Activated CD4-positive, alpha-beta T cell treated with anti-CD3 and anti-CD28 coated beads for 36 hours (primary cell): ENCODE measurements at regions of chr3 and their contacts with region 1.

Region 1: GRCh38 chr3:189041482-189042090 is 130.2 kb upstream of the TPRG1 start:
- DNase-seq: peak; percentile 87
- ATAC-seq: peak; percentile 93
- H3K4me3 Mint-ChIP-seq: no peak overlapping the region
- H3K27ac Mint-ChIP-seq: no peak overlapping the region
- H3K4me1 Mint-ChIP-seq: peaks cover 36% of the 10 kb centered on the region
- H3K27me3 Mint-ChIP-seq: peaks cover 6% of the 10 kb centered on the region

Region 2: DNA sequence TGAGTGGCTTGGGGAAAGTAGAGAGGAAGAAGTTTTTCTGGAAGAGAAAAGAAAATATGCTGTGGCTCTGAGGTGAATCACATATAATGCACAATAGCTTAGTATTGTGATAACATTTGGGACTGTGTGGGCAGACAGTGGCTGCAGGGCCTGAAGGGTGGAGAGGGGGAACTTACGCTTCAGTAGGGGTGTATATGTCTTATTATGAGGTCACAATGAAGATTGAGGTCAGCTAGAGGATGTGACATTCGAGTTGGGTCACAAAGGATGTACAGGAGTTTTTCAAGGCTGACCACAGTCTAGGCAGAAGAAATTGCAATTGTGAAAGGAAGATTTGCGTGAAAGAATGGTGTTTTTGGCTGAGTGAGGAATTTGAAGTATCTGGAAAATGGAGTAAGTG is 472.9 kb before region 1 on chr3:
- CTCF ChIA-PET with region 1: no interaction called
- POLR2A ChIA-PET with region 1: no interaction called
- intact Hi-C with region 1: no loop called
- DNase-seq: no peak
- ATAC-seq: no peak
- H3K4me3 Mint-ChIP-seq: no peak overlapping the region
- H3K27ac Mint-ChIP-seq: no peak overlapping the region
- H3K4me1 Mint-ChIP-seq: peaks cover 3% of the 10 kb centered on the region
- H3K27me3 Mint-ChIP-seq: no peaks in the 10 kb centered on the region

Region 3: GRCh38 chr3:189013224-189013888 is 28.2 kb before region 1 on chr3:
- CTCF ChIA-PET with region 1: no interaction called
- POLR2A ChIA-PET with region 1: no interaction called
- intact Hi-C with region 1: loop called in 1 of 2 experiments (anchors 1 kb)
- DNase-seq: no peak
- ATAC-seq: peak; percentile 74
- H3K4me3 Mint-ChIP-seq: no peak overlapping the region
- H3K27ac Mint-ChIP-seq: no peak overlapping the region
- H3K4me1 Mint-ChIP-seq: peaks cover 20% of the 10 kb centered on the region
- H3K27me3 Mint-ChIP-seq: peaks cover 12% of the 10 kb centered on the region

Region 4: DNA sequence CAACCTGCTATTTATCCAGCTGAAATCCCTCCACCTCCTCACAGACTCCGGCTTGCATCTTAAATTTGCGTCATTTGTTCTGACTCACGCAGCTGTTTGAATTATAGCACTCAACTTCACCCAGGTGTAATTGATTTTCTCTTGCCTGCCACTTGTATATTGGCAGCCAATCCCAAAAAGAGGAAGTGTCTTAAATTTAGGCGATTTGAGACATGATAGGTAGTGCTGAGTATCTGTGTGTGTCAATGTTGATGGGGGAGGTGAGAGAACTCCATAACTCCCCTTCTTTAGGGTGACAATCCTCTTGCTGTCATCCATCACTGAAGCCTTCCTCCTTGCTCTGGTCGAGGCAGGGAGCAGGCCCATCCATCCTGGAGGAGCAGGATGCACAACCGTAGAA is 53.0 kb after region 1 on chr3:
- CTCF ChIA-PET with region 1: no interaction called
- POLR2A ChIA-PET with region 1: no interaction called
- intact Hi-C with region 1: no loop called
- DNase-seq: no peak
- ATAC-seq: no peak
- H3K4me3 Mint-ChIP-seq: no peak overlapping the region
- H3K27ac Mint-ChIP-seq: no peak overlapping the region
- H3K4me1 Mint-ChIP-seq: no peaks in the 10 kb centered on the region
- H3K27me3 Mint-ChIP-seq: peaks cover 3% of the 10 kb centered on the region

Region 5: DNA sequence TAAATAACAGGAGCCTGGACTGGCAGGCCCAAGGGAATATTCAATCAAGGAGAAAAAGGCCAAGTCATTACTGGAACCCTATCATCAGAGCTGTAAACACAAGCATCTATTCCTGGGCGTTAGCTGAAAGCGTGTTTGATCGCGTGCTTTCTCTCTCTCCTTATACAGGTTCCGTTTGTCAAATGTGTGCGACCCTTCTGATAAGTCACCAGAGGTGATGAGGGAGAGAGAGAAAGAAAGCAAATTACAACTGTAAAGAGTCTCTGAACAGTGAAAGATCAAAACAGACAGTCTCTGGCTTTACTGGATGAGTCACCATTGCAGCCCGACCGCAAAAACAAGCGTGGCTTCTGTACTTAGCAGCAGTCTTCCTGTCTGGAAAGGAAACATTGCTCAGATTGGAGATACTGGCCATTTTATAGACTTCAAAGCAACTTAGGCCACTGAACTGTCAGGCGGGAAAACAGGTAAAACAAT is 90.7 kb after region 1 on chr3:
- CTCF ChIA-PET with region 1: interaction called, 8 read pairs
- POLR2A ChIA-PET with region 1: no interaction called
- intact Hi-C with region 1: loop called (anchors 1 to 5 kb)
- DNase-seq: peak; percentile 88
- ATAC-seq: peak; percentile 96
- H3K4me3 Mint-ChIP-seq: peak overlapping the region; percentile 24
- H3K27ac Mint-ChIP-seq: peak overlapping the region; percentile 58
- H3K4me1 Mint-ChIP-seq: peaks cover 21% of the 10 kb centered on the region
- H3K27me3 Mint-ChIP-seq: no peaks in the 10 kb centered on the region

Region 6: GRCh38 chr3:189148081-189148507 is 106.5 kb after region 1 on chr3:
- CTCF ChIA-PET with region 1: interaction called, 4 read pairs
- POLR2A ChIA-PET with region 1: no interaction called
- intact Hi-C with region 1: loop called in 1 of 2 experiments (anchors 2 kb)
- DNase-seq: peak; percentile 81
- ATAC-seq: peak; percentile 66
- H3K4me3 Mint-ChIP-seq: no peak overlapping the region
- H3K27ac Mint-ChIP-seq: no peak overlapping the region
- H3K4me1 Mint-ChIP-seq: peaks cover 17% of the 10 kb centered on the region
- H3K27me3 Mint-ChIP-seq: peaks cover 3% of the 10 kb centered on the region

Region 7: DNA sequence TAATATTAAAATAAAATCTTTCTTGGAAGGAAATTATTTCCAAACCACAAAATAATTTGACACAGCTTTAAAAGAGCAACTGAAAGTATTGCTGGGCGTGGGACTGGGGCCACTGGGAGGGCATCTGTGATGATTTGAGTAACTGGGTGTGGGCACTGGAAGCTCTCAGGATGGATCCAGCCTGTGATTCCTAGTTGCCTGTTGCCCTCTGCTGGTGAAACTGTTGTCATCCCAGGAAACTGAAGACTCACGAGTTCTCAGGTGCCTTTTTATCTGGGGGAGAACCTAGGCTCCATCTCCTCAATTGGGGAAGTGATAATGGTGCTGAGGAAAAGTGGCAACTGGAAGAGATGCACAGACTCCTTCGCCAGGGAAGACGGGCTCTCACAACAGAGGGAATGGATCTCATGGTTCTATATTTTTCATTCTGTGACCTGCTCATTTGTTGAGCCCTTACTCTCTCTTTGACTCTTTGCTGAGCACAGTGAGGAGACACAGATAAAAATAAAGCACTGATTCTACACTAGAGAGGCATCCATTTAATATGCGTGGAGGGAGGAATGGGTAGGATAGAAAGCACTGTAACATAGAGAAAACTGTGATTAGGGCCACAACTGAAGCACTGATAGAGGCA is 191.8 kb after region 1 on chr3:
- CTCF ChIA-PET with region 1: no interaction called
- POLR2A ChIA-PET with region 1: no interaction called
- intact Hi-C with region 1: loop called in 1 of 2 experiments (anchors 5 kb)
- DNase-seq: peak; percentile 54
- ATAC-seq: peak; percentile 40
- H3K4me3 Mint-ChIP-seq: no peak overlapping the region
- H3K27ac Mint-ChIP-seq: no peak overlapping the region
- H3K4me1 Mint-ChIP-seq: peaks cover 27% of the 10 kb centered on the region
- H3K27me3 Mint-ChIP-seq: peaks cover 2% of the 10 kb centered on the region

Region 8: GRCh38 chr3:189355481-189356201 is 314.1 kb after region 1 on chr3:
- CTCF ChIA-PET with region 1: no interaction called
- POLR2A ChIA-PET with region 1: no interaction called
- intact Hi-C with region 1: no loop called
- DNase-seq: peak; percentile 56
- ATAC-seq: peak; percentile 92
- H3K4me3 Mint-ChIP-seq: peak overlapping the region; percentile 30
- H3K27ac Mint-ChIP-seq: peak overlapping the region; percentile 83
- H3K4me1 Mint-ChIP-seq: peaks cover 29% of the 10 kb centered on the region
- H3K27me3 Mint-ChIP-seq: no peaks in the 10 kb centered on the region